ENCODE measurements at regions of chr14 and their contacts with region 1.

Region 1: GRCh38 chr14:33068626-33069025 is 129.9 kb downstream of the NPAS3 start:
- DNase-seq: no peak
- H3K4me3 ChIP-seq: no peak overlapping the region
- H3K27ac ChIP-seq: no peak overlapping the region
- H3K4me1 ChIP-seq: peaks cover under 1% of the 10 kb centered on the region
- H3K27me3 ChIP-seq: no peaks in the 10 kb centered on the region
- CTCF ChIP-seq: no peak

Region 2: DNA sequence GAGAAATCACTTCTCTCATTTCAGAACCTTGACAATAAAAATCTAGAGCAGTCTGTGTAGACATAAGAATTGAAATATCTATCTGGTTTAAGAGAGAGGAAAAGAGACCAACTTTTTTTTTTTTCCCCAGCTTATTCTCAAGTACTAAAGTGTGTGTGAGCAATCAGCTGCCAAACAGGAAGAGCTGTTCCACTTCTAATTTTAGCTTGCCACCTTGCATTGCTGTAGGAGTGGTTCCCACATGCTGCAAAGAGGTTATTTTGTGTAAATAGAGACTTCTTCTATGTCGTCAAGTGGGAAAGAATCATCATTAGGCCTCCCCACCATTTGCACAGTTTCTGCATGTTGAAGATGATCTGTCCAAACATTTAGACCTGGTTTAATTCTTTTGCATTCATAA is 12.6 kb after region 1 on chr14:
- CTCF ChIA-PET with region 1: interaction called, 15 read pairs
- POLR2A ChIA-PET with region 1: no interaction called
- intact Hi-C with region 1: no loop called
- DNase-seq: no peak
- H3K4me3 ChIP-seq: no peak overlapping the region
- H3K27ac ChIP-seq: no peak overlapping the region
- H3K4me1 ChIP-seq: peaks cover 26% of the 10 kb centered on the region
- H3K27me3 ChIP-seq: no peaks in the 10 kb centered on the region
- CTCF ChIP-seq: no peak

Measured in A673 (cell line).